Upper lobe of right lung (tissue), 1 donor: ENCODE measurements at regions of chr13 and their contacts with region 1.

Region 1: GRCh38 chr13:26698392-26699196 is 62.0 kb downstream of the GPR12 start:
- DNase-seq: peak; percentile 86
- ATAC-seq: peak; percentile 96
- H3K4me3 ChIP-seq: no peak overlapping the region
- H3K27ac ChIP-seq: no peak overlapping the region
- H3K4me1 ChIP-seq: no peaks in the 10 kb centered on the region
- H3K27me3 ChIP-seq: no peaks in the 10 kb centered on the region
- CTCF ChIP-seq: peak; percentile 99

Region 2: DNA sequence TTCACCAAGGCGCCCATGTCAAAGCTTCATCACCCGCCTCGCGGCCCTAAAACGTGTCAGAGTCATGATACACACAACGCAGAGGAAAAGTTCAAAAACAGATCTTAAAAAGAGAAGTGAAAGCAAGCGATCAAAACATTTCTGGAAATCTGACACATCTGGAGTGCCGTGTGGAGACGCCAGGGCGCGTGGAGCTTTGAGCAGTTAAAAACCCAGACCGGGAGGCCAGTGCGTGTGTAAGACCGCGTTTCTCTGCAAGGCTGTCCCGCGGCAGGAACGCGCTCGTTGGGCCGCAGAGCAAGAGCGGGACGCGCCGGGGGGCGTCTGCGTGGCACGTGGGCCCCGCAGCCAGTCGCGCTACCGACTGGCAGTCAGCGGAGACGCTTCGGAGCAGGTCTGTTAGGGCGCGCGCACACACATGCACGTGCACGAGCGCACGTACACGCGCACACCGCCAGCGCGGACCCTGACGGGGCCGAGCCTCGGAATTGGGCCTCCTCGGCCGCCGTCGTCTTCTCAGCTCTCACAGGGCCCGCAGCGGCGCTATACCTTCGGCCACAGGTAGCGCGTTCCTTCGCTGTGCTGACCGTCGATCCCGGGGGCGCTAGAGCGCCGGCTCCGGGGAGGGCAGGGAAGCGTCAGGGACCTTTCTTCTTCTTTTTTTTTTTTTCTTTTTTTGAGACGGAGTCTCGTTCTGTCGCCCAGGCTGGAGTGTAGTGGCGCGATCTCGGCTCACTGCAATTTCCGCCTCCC is 512.3 kb before region 1 on chr13:
- intact Hi-C with region 1: loop called (anchors 10 kb)
- DNase-seq: peak; percentile 96
- ATAC-seq: peak; percentile 99
- H3K4me3 ChIP-seq: peak overlapping the region; percentile 70
- H3K27ac ChIP-seq: peak overlapping the region; percentile 84
- H3K4me1 ChIP-seq: peaks cover 8% of the 10 kb centered on the region
- H3K27me3 ChIP-seq: no peaks in the 10 kb centered on the region
- CTCF ChIP-seq: peak; percentile 43

Region 3: DNA sequence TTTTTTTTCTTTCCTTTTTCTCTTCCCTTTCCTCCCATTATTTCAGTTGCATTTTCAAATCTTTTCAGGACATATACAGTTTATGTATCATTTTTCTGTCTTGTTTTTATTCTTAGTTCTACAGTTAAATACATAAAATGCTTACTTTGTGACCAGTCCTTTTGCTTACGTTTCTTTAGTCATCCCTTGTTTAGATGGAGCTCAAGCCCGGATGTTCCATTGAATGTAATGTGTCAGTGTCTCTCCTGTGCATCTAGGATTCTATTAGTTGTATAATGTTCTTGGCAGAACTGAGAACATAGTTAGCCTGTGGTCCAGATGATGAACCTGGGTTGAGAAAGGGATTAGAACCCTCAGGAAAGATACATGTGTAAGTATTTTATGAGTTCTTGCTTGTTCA is 123.3 kb before region 1 on chr13:
- intact Hi-C with region 1: no loop called
- DNase-seq: no peak
- ATAC-seq: no peak
- H3K4me3 ChIP-seq: no peak overlapping the region
- H3K27ac ChIP-seq: no peak overlapping the region
- H3K4me1 ChIP-seq: no peaks in the 10 kb centered on the region
- H3K27me3 ChIP-seq: no peaks in the 10 kb centered on the region
- CTCF ChIP-seq: no peak